ENCODE measurements at regions of chr4 and their contacts with region 1.

Region 1: DNA sequence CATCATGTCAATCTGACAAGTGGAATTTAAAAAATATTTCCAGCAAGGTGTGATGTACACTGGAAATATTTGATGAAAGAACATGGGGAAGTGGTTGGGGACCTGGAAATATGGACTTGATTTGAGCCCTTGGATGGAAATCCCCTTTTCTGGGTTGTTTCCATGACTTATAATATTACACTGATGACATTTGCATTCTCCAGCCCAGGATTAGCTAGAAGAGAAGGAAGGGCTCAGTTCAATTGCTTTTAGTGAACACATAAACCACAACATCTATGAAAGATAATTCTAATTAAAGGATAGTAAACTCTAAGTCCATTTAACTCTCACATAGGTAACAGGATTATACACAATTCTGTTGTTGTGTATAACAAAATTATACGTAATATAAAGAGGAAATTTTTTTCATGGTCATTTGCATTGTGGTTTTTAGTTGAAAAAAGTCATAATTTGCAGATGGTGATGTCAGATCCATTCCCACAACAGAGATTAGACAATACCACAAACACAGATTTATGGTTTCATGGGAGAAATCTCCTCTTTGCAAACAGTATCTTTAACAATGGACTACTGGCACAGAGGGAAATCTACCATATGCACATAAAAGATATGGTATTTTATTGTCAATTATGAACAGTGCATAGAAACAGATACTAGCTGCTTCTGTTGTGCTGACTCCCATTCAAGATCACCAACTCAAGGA is 126.5 kb downstream of the DKK2 start:
- DNase-seq: no peak
- ATAC-seq: no peak
- H3K4me3 ChIP-seq: no peak overlapping the region
- H3K27ac ChIP-seq: no peak overlapping the region
- H3K4me1 ChIP-seq: no peaks in the 10 kb centered on the region
- H3K27me3 ChIP-seq: no peaks in the 10 kb centered on the region
- CTCF ChIP-seq: no peak
- EP300 ChIP-seq: no peak
- POLR2A ChIP-seq: no peak
- RAD21 ChIP-seq: no peak

Region 2: GRCh38 chr4:106809076-106809475 is 100.6 kb before region 1 on chr4:
- CTCF ChIA-PET with region 1: no interaction called
- POLR2A ChIA-PET with region 1: no interaction called
- RAD21 ChIA-PET with region 1: no interaction called
- SMC1A ChIA-PET with region 1: no interaction called
- in situ Hi-C with region 1: no loop called
- intact Hi-C with region 1: no loop called
- DNase-seq: no peak
- ATAC-seq: peak; percentile 50; the same call in 2 of the 3 replicates
- H3K4me3 ChIP-seq: no peak overlapping the region
- H3K27ac ChIP-seq: no peak overlapping the region
- H3K4me1 ChIP-seq: no peaks in the 10 kb centered on the region
- H3K27me3 ChIP-seq: no peaks in the 10 kb centered on the region; a peak in 1 of 4 replicates
- CTCF ChIP-seq: peak in 1 of 3 experiments; percentile 32; a peak in 1 of 6 replicates
- EP300 ChIP-seq: no peak
- POLR2A ChIP-seq: no peak
- RAD21 ChIP-seq: peak; percentile 46

Region 3: GRCh38 chr4:106898621-106899230 is 10.9 kb before region 1 on chr4:
- CTCF ChIA-PET with region 1: interaction called, 31 read pairs
- POLR2A ChIA-PET with region 1: no interaction called
- RAD21 ChIA-PET with region 1: no interaction called
- SMC1A ChIA-PET with region 1: interaction called, 4 read pairs
- in situ Hi-C with region 1: no loop called
- intact Hi-C with region 1: no loop called
- DNase-seq: no peak
- ATAC-seq: peak; percentile 88
- H3K4me3 ChIP-seq: no peak overlapping the region
- H3K27ac ChIP-seq: no peak overlapping the region
- H3K4me1 ChIP-seq: no peaks in the 10 kb centered on the region
- H3K27me3 ChIP-seq: no peaks in the 10 kb centered on the region
- CTCF ChIP-seq: peak; percentile 63 to 75 (median 65)
- EP300 ChIP-seq: no peak
- POLR2A ChIP-seq: no peak
- RAD21 ChIP-seq: peak; percentile 64

Region 4: GRCh38 chr4:106951891-106952290 is 42.3 kb after region 1 on chr4:
- CTCF ChIA-PET with region 1: no interaction called
- POLR2A ChIA-PET with region 1: no interaction called
- RAD21 ChIA-PET with region 1: no interaction called
- SMC1A ChIA-PET with region 1: no interaction called
- in situ Hi-C with region 1: no loop called
- intact Hi-C with region 1: no loop called
- DNase-seq: no peak
- ATAC-seq: no peak
- H3K4me3 ChIP-seq: no peak overlapping the region
- H3K27ac ChIP-seq: no peak overlapping the region
- H3K4me1 ChIP-seq: no peaks in the 10 kb centered on the region
- H3K27me3 ChIP-seq: no peaks in the 10 kb centered on the region
- CTCF ChIP-seq: no peak
- EP300 ChIP-seq: no peak
- POLR2A ChIP-seq: no peak
- RAD21 ChIP-seq: no peak